CD4-positive, alpha-beta memory T cell (primary cell): ENCODE measurements at regions of chr12 and their contacts with region 1.

Region 1: GRCh38 chr12:124992874-124993625 is 395 bp upstream of the BRI3BP start:
- DNase-seq: peak; percentile 81 to 91 (median 85)
- H3K4me3 ChIP-seq: peak overlapping the region; percentile 78 to 90
- H3K4me3 Mint-ChIP-seq: peak overlapping the region; percentile 84 to 92 (median 88)
- H3K27ac ChIP-seq: peak overlapping the region; percentile 41
- H3K27ac Mint-ChIP-seq: peak overlapping the region; percentile 79 to 95 (median 85)
- H3K4me1 ChIP-seq: peaks cover 35% of the 10 kb centered on the region
- H3K4me1 Mint-ChIP-seq: peaks cover 19 to 41% (median 33%) of the 10 kb centered on the region in 4 donors
- H3K27me3 ChIP-seq: no peaks in the 10 kb centered on the region
- H3K27me3 Mint-ChIP-seq: no peaks in the 10 kb centered on the region

Region 2: DNA sequence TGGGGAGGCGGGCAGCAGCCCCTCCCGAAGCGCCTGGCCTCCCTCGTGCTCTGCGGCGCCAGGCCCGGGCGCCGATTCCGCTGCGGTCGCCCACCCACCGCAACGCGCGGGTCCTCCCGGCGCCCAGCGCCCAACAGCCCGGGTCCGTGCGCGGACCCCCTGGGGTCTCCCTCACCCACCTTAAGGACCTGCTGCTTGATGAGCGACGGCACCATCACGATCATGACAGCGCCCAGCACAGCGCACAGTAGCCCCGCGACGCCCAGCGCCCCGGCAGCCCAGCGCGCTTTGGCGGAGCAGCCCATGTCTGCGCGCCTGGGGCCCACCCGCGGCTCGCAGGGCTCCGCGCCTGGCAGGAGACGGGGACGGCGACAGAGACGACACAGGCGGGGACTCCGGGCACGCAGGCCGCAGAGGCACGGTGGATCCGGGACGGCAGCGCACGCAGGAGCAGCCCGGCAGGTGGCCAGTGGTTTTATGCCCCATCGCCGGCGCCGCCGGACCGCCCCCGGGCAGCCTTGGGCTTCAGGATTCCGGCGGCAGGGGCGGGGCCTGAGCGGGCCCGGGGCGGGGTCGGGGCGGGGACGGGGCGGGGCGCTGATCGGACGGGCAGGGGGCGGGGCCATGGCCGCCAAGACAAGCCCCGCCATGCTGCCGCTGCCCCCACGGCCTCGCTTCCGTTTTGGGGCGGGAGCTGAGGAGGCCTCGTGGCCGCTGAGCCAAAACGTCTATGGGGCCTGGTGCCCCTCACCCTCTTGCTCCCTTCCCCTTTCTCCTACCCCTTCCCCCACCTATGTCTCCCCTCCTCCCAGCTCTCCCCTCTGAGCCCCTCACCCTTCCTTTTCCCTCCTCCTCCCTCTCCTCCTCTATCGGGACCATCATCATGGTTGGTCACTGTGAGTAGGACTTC is 129.4 kb before region 1 on chr12 and contains the start of gene SCARB1:
- CTCF ChIA-PET with region 1: no interaction called
- POLR2A ChIA-PET with region 1: no interaction called
- intact Hi-C with region 1: loop called (anchors 5 kb)
- DNase-seq: peak; percentile 68 to 76 (median 70)
- H3K4me3 ChIP-seq: peak within 1 kb of the TSS; percentile 34 to 66
- H3K4me3 Mint-ChIP-seq: peak within 1 kb of the TSS; percentile 76 to 86 (median 81)
- H3K27ac ChIP-seq: no peak within 1 kb of the TSS
- H3K27ac Mint-ChIP-seq: peak within 1 kb of the TSS in 6 of 7 donors; percentile 54 to 89 (median 81)
- H3K4me1 ChIP-seq: peaks cover 12% of the 10 kb centered on the region
- H3K4me1 Mint-ChIP-seq: peaks cover 5 to 21% (median 12%) of the 10 kb centered on the region in 4 donors
- H3K27me3 ChIP-seq: no peaks in the 10 kb centered on the region
- H3K27me3 Mint-ChIP-seq: peaks cover 0 to 3% of the 10 kb centered on the region in 2 donors
- total RNA-seq, gene SCARB1: 2.2 to 2.6 TPM

Region 3: GRCh38 chr12:124917135-124917840 is 75.8 kb before region 1 on chr12:
- CTCF ChIA-PET with region 1: interaction called, 3 read pairs
- POLR2A ChIA-PET with region 1: interaction called, 44 read pairs
- intact Hi-C with region 1: loop called (anchors 2 kb)
- DNase-seq: peak; percentile 94 to 98 (median 96)
- H3K4me3 ChIP-seq: peak overlapping the region; percentile 39 to 53
- H3K4me3 Mint-ChIP-seq: peak overlapping the region; percentile 82 to 99 (median 87)
- H3K27ac ChIP-seq: peak overlapping the region; percentile 84
- H3K27ac Mint-ChIP-seq: peak overlapping the region; percentile 95 to 100 (median 97)
- H3K4me1 ChIP-seq: peaks cover 81% of the 10 kb centered on the region
- H3K4me1 Mint-ChIP-seq: peaks cover 70 to 98% (median 83%) of the 10 kb centered on the region in 4 donors
- H3K27me3 ChIP-seq: no peaks in the 10 kb centered on the region
- H3K27me3 Mint-ChIP-seq: peaks cover 2 to 9% of the 10 kb centered on the region in 2 donors

Region 4: GRCh38 chr12:124940549-124941527 is 52.2 kb before region 1 on chr12:
- CTCF ChIA-PET with region 1: interaction called, 6 read pairs
- POLR2A ChIA-PET with region 1: interaction called, 17 read pairs
- intact Hi-C with region 1: loop called (anchors 1 kb)
- DNase-seq: peak; percentile 76 to 87 (median 77)
- H3K4me3 ChIP-seq: peak overlapping the region; percentile 73 to 82
- H3K4me3 Mint-ChIP-seq: no peak overlapping the region
- H3K27ac ChIP-seq: peak overlapping the region; percentile 54
- H3K27ac Mint-ChIP-seq: peak overlapping the region in 1 of 7 donors; percentile 29
- H3K4me1 ChIP-seq: peaks cover 30% of the 10 kb centered on the region
- H3K4me1 Mint-ChIP-seq: peaks cover 0 to 9% (median 6%) of the 10 kb centered on the region in 4 donors
- H3K27me3 ChIP-seq: no peaks in the 10 kb centered on the region
- H3K27me3 Mint-ChIP-seq: no peaks in the 10 kb centered on the region

Region 5: DNA sequence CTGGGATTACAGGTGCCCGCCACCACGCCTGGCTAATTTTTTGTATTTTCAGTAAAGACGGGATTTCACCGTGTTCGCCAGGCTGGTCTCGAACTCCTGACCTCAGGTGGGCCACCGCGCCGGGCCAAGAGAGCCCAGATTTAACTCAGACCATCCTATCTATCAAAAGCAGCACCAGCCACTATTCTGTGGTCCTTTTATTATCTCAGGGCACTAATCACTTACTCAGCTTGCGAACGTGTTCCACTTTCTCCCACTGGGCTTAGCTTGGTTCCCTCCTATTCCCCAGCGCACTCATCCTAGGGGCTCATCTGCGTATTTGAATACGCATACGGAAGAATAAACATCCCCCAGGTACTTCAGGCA is 56.0 kb after region 1 on chr12:
- CTCF ChIA-PET with region 1: interaction called, 3 read pairs
- POLR2A ChIA-PET with region 1: interaction called, 9 read pairs
- intact Hi-C with region 1: loop called (anchors 1 kb)
- DNase-seq: no peak
- H3K4me3 ChIP-seq: peak overlapping the region; percentile 58 to 95
- H3K4me3 Mint-ChIP-seq: peak overlapping the region; percentile 86 to 94 (median 90)
- H3K27ac ChIP-seq: peak overlapping the region; percentile 49
- H3K27ac Mint-ChIP-seq: peak overlapping the region; percentile 44 to 93 (median 88)
- H3K4me1 ChIP-seq: peaks cover 4% of the 10 kb centered on the region
- H3K4me1 Mint-ChIP-seq: peaks cover 2 to 18% (median 7%) of the 10 kb centered on the region in 4 donors
- H3K27me3 ChIP-seq: no peaks in the 10 kb centered on the region
- H3K27me3 Mint-ChIP-seq: no peaks in the 10 kb centered on the region

Region 6: DNA sequence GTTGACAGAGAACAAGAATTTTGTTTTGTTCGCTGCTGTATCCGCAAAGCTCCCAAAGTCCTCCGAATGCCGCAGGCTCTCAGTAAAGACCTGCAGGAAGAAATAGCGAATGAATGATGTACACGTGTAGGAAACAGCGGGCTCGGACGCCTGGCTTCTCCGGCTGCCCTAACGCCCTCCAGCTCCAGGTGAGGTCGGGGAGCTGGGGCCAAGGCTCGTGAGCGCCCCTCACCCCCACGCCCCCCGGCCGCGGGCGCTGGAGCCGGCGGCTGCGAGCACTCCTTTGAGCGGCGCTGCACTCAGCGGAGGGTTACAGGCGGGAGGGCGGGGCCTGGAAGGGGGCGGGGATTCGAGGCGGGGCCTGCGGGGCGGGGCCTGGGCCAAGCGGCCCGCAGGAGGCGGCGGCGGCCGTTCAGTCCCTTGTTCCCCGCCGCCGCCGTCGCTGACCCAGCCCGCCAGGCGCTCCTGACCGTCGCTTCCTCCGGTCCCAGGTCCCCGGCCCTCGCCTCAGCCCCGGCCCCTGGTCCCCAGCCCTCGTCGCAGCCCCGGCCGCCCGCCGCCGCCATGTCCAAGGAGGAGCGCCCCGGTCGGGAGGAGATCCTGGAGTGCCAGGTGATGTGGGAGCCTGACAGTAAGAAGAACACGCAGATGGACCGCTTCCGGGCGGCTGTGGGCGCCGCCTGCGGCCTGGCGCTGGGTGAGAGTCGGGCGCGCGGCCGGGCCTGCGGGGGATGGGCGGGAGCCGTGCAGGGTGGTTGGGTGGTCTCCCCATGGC is 72.2 kb after region 1 on chr12 and contains the start of gene AACS:
- CTCF ChIA-PET with region 1: interaction called, 3 read pairs
- POLR2A ChIA-PET with region 1: no interaction called
- intact Hi-C with region 1: loop called (anchors 1 kb)
- DNase-seq: peak; percentile 64 to 73 (median 68)
- H3K4me3 ChIP-seq: peak within 1 kb of the TSS; percentile 30 to 58
- H3K4me3 Mint-ChIP-seq: peak within 1 kb of the TSS; percentile 83 to 96 (median 88)
- H3K27ac ChIP-seq: peak within 1 kb of the TSS; percentile 56
- H3K27ac Mint-ChIP-seq: peak within 1 kb of the TSS; percentile 66 to 93 (median 82)
- H3K4me1 ChIP-seq: peaks cover 15% of the 10 kb centered on the region
- H3K4me1 Mint-ChIP-seq: peaks cover 11 to 21% (median 13%) of the 10 kb centered on the region in 4 donors
- H3K27me3 ChIP-seq: peaks cover 7% of the 10 kb centered on the region
- H3K27me3 Mint-ChIP-seq: peaks cover under 1 to 2% of the 10 kb centered on the region in 2 donors
- total RNA-seq, gene AACS: 11.8 to 12.2 TPM